ENCODE measurements at regions of chr1 and their contacts with region 1.

Region 1: DNA sequence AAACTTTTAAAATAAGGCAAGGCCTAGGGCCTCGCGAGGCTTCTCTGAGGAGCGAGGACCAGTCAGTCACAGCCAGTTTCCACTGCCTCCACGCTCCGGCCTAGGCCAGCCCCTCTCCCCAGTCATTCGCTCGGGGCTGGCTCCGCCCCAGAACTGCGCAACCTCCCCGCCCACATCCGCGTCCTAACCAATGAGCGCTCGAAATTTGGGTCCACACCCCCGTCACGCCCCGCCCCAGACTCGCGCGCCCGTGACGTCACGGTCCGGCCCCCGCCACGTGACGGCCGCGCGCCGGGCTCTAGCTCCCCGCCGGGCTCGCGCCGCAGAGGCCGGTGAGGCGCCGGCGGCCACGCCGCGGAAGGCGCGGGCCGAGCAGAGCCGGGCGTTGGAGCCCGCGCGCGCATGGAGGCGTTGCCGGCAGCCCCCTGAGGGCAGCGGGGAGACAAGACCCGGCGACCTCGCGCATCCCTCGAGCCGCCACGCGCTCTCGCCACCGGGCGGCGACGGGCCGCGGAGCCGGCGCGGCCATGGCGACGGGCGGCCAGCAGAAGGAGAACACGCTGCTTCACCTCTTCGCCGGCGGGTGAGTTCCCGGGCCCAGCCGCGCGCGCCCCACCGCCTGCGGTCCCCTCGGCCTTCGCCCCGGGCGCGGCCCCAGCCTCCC is at the start of gene SLC25A33:
- DNase-seq: peak; percentile 89
- ATAC-seq: peak; percentile 98
- H3K4me3 ChIP-seq: peak within 1 kb of the TSS; percentile 70 to 74
- H3K27ac ChIP-seq: peak within 1 kb of the TSS; percentile 88
- H3K4me1 ChIP-seq: peaks cover 17% of the 10 kb centered on the region
- H3K27me3 ChIP-seq: no peaks in the 10 kb centered on the region
- CTCF ChIP-seq: no peak
- total RNA-seq, gene SLC25A33: 13.4 TPM

Region 2: DNA sequence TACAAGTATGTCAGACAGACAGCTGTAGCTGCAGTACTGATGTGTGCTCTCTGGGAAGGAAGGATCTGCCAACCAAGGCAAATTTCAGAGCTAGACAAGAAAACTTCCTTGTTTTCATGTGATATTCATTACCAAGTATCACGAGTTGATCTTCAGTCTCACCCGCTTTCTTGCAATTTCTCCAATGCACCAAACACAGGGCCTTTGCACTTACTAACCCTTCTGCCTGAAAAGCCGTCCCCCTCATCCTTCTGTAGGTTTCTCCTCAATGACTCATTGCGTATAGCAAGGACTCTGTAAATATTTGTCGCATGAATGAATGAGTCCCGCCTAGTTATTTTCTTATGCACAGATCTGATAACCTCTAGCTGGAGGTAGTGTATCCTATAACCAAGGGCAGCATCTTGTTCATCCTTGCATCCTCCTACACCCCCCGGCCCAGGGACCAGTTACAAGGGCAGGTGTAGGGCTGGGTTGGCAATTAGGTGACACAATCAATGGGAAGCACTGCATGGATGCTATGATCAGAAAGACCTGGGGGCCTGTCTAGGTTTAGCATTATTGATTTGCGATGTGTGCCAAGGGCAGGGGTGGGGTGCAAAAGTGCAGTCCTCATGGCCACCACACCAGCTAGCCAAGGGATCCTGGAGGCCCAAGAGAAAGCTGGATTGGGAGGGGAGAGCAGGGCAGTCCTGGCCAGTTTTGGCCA is 359.0 kb before region 1 on chr1:
- CTCF ChIA-PET with region 1: no interaction called
- POLR2A ChIA-PET with region 1: interaction called, 13 read pairs
- in situ Hi-C with region 1: no loop called
- intact Hi-C with region 1: no loop called
- DNase-seq: no peak
- ATAC-seq: peak; percentile 89
- H3K4me3 ChIP-seq: peak overlapping the region; percentile 55 to 61; a peak in 3 of 4 replicates
- H3K27ac ChIP-seq: peak overlapping the region; percentile 70
- H3K4me1 ChIP-seq: peaks cover 26% of the 10 kb centered on the region
- H3K27me3 ChIP-seq: no peaks in the 10 kb centered on the region
- CTCF ChIP-seq: no peak

Region 3: GRCh38 chr1:9476790-9477463 is 62.4 kb before region 1 on chr1:
- CTCF ChIA-PET with region 1: no interaction called
- POLR2A ChIA-PET with region 1: no interaction called
- in situ Hi-C with region 1: no loop called
- intact Hi-C with region 1: no loop called
- DNase-seq: no peak
- ATAC-seq: peak; percentile 72
- H3K4me3 ChIP-seq: no peak overlapping the region
- H3K27ac ChIP-seq: peak overlapping the region; percentile 57
- H3K4me1 ChIP-seq: peaks cover 19% of the 10 kb centered on the region
- H3K27me3 ChIP-seq: no peaks in the 10 kb centered on the region
- CTCF ChIP-seq: no peak

Region 4: GRCh38 chr1:9558271-9558945 is 19.1 kb after region 1 on chr1:
- CTCF ChIA-PET with region 1: no interaction called
- POLR2A ChIA-PET with region 1: interaction called, 10 read pairs
- in situ Hi-C with region 1: no loop called
- intact Hi-C with region 1: no loop called
- DNase-seq: no peak
- ATAC-seq: no peak
- H3K4me3 ChIP-seq: no peak overlapping the region
- H3K27ac ChIP-seq: no peak overlapping the region
- H3K4me1 ChIP-seq: no peaks in the 10 kb centered on the region
- H3K27me3 ChIP-seq: no peaks in the 10 kb centered on the region
- CTCF ChIP-seq: no peak